ENCODE measurements at regions of chr11 and their contacts with region 1.

Region 1: GRCh38 chr11:61584806-61585514 is 4.1 kb upstream of the SYT7 start:
- DNase-seq: no peak
- H3K4me3 Mint-ChIP-seq: no peak overlapping the region
- H3K27ac Mint-ChIP-seq: no peak overlapping the region
- H3K4me1 Mint-ChIP-seq: peaks cover 14% of the 10 kb centered on the region
- H3K27me3 Mint-ChIP-seq: peaks cover 48% of the 10 kb centered on the region

Region 2: DNA sequence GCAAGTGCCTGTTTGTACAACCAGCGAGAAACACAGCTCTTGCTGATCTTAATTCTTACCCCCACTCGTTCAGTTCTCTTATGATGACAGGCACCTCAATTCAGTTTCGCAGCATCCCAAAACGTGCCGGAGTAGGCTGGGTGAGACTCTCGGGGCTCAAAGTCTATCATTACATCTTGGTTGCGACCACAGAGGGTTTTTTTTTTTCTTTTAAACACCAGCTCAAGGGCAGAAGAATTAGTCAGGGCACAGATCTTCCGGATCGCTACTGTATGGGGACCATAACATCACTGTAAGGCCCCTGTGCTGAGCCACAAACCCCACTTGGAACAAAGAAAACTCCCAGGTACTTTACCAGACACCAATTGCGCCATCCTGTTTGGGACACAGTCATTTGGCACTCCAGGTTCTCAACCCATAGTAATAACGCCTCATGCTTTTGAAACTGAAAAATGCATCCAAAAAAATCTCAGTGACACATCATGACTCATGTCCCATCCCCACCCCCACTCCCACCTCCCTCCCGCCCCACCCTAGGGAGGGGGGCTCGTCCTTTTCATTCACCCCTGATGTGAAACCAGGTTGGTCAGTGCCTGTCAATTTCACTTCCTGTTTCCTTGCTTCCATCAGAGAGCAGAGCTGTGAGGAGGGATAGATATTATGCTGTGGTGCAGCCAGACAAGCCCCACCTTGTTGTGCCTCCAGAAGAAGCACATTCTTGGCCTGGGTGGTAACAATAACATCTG is 523.7 kb before region 1 on chr11:
- intact Hi-C with region 1: no loop called
- DNase-seq: peak; percentile 76
- H3K4me3 Mint-ChIP-seq: peak overlapping the region; percentile 70
- H3K27ac Mint-ChIP-seq: peak overlapping the region; percentile 88
- H3K4me1 Mint-ChIP-seq: peaks cover 77% of the 10 kb centered on the region
- H3K27me3 Mint-ChIP-seq: no peaks in the 10 kb centered on the region

Region 3: GRCh38 chr11:61294717-61295595 is 290.0 kb before region 1 on chr11 and contains the start of gene VWCE:
- intact Hi-C with region 1: no loop called
- DNase-seq: peak; percentile 64
- H3K4me3 Mint-ChIP-seq: peak within 1 kb of the TSS; percentile 83
- H3K27ac Mint-ChIP-seq: peak within 1 kb of the TSS; percentile 79
- H3K4me1 Mint-ChIP-seq: peaks cover 28% of the 10 kb centered on the region
- H3K27me3 Mint-ChIP-seq: peaks cover 16% of the 10 kb centered on the region
- total RNA-seq, gene VWCE: 9.4 and 10.9 TPM in 2 replicates

Region 4: DNA sequence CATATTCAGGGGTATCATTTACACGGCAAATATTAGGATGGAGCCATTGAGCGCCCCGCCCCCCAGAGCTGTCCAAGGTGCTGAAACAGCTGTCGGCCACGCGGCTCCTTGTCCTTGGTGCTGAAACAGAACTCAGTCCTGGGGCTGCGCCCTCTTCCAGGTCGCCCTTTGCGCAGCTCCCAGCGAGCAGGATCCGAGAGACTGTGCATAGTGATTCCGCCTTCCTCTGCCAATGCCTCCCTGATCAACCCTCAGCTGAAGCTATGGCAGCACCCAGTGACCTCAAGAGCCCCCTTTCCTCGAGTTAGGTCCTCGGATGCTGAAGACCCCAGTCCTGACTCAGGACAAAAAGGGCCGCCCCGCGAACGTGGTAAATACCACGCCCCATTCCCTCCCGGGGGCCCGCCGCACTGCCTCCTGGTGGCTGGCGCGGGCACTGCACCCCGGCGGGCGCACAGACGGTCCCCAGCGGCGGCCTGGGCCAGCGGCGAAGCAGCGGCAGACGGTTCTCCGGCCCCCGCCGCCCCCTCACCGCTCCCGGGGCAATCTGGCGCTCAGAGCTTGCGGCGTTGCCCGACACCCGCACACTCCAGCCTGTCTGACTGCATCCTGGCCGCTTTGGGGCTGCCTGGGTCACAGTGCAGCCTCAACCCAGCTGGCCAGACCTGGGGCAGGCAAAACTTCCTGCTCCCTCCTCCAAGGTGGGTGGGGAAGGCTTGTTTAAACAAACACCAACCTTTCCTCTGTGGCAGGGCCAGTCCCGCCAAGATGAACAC is 17.5 kb before region 1 on chr11:
- intact Hi-C with region 1: loop called (anchors 1 kb)
- DNase-seq: peak; percentile 54
- H3K4me3 Mint-ChIP-seq: no peak overlapping the region
- H3K27ac Mint-ChIP-seq: no peak overlapping the region
- H3K4me1 Mint-ChIP-seq: no peaks in the 10 kb centered on the region
- H3K27me3 Mint-ChIP-seq: peaks cover 17% of the 10 kb centered on the region

Measured in activated T-helper 1 cell treated with anti-CD3 and anti-CD28 coated beads, Interleukin-12 subunit alpha, Interleukin-12 subunit beta, Interleukin-2, Interleukin-4 antibody, amounts not matched to agents 30 ng/mL and 10 ng/mL and 1 ng/mL, durations not matched to agents 14 hours and 24 hours and 36 hours (primary cell).